HepG2 (cell line): ENCODE measurements at regions of chr5 and their contacts with region 1.

Region 1: GRCh38 chr5:149834246-149834855 is 104.2 kb downstream of the PPARGC1B start:
- DNase-seq: peak; percentile 60
- ATAC-seq: peak; percentile 64
- H3K4me3 ChIP-seq: no peak overlapping the region
- H3K27ac ChIP-seq: no peak overlapping the region
- H3K4me1 ChIP-seq: no peaks in the 10 kb centered on the region
- H3K27me3 ChIP-seq: no peaks in the 10 kb centered on the region
- CTCF ChIP-seq: peak; percentile 85
- EP300 ChIP-seq: no peak
- POLR2A ChIP-seq: no peak
- RAD21 ChIP-seq: peak; percentile 47; the same call in 1 of the 2 replicates

Region 2: DNA sequence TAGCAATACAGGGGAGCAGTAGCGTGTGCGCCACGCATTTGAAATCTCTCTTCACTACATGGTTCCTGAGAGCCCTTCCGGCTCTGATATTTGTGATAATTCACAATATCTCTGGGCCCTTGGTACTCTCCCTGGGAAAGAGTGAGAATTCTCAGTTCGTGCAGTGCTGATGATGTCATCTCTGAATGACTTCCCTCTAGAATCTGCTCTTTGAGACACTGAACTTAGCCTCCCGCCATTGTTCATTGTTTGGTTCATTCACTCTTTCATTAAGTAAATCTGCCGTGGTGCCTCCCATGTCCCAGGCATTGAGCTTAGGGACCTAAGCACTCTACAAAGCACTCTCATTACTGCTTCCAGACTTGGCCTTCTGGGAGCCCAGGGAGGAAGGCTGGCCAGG is 10.2 kb before region 1 on chr5:
- CTCF ChIA-PET with region 1: no interaction called
- POLR2A ChIA-PET with region 1: no interaction called
- in situ Hi-C with region 1: no loop called
- intact Hi-C with region 1: no loop called
- DNase-seq: peak; percentile 11
- ATAC-seq: no peak
- H3K4me3 ChIP-seq: no peak overlapping the region
- H3K27ac ChIP-seq: no peak overlapping the region
- H3K4me1 ChIP-seq: peaks cover 9% of the 10 kb centered on the region; the same call in 1 of the 2 replicates
- H3K27me3 ChIP-seq: no peaks in the 10 kb centered on the region
- CTCF ChIP-seq: no peak
- EP300 ChIP-seq: no peak
- POLR2A ChIP-seq: no peak
- RAD21 ChIP-seq: no peak

Region 3: DNA sequence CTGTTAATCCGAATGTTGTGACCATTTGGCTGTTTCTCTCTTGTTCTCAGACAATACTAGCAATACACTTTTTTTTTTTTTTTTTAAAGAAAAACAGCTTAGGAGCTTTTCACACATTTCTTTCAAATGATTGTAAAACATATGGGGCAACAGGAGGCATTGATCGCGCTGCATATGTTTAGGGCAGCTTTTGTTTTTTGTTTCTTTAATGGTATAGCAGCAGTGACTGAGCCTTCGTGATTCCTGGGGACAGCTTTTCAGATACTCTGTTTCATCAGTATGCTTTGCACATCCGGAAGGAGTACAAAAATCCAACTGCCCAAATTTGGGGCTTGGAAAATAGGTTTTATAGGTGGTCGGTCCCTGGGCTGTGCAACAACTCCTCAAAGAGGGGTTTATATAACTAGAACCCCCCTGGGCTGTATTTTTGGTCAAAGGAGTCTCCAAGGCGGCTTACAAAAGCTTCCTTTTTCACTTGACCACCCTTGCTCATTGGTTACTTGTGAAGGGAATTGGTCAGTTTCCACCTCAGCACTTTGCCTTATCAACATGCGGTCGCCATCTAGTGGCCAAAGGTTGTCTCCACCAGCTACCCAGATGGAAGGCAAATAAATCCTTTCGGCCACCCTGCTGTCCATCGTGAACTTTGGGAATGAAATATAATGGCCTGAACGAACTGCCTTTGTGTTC is 18.4 kb after region 1 on chr5:
- CTCF ChIA-PET with region 1: interaction called, 19 read pairs
- POLR2A ChIA-PET with region 1: interaction called, 3 read pairs
- in situ Hi-C with region 1: no loop called
- intact Hi-C with region 1: loop called (anchors 1 kb)
- DNase-seq: peak; percentile 58
- ATAC-seq: peak; percentile 92
- H3K4me3 ChIP-seq: no peak overlapping the region
- H3K27ac ChIP-seq: no peak overlapping the region
- H3K4me1 ChIP-seq: no peaks in the 10 kb centered on the region
- H3K27me3 ChIP-seq: no peaks in the 10 kb centered on the region
- CTCF ChIP-seq: peak; percentile 88
- EP300 ChIP-seq: no peak
- POLR2A ChIP-seq: no peak
- RAD21 ChIP-seq: 0 out of 2 replicates have a peak, but pooled peaks have one; percentile 35

Region 4: GRCh38 chr5:149960272-149961185 is 126.2 kb after region 1 on chr5 and contains the start of gene SLC26A2:
- CTCF ChIA-PET with region 1: interaction called, 6 read pairs
- POLR2A ChIA-PET with region 1: no interaction called
- in situ Hi-C with region 1: no loop called
- intact Hi-C with region 1: loop called (anchors 1 kb)
- DNase-seq: peak; percentile 92
- ATAC-seq: peak; percentile 99
- H3K4me3 ChIP-seq: peak within 1 kb of the TSS; percentile 51 to 77 (median 69)
- H3K27ac ChIP-seq: peak within 1 kb of the TSS; percentile 52
- H3K4me1 ChIP-seq: peaks cover 50% of the 10 kb centered on the region
- H3K27me3 ChIP-seq: no peaks in the 10 kb centered on the region
- CTCF ChIP-seq: peak; percentile 17; the same call in 1 of the 2 replicates
- EP300 ChIP-seq: no peak
- POLR2A ChIP-seq: peak; percentile 85 to 91
- RAD21 ChIP-seq: peak; percentile 48; the same call in 1 of the 2 replicates
- total RNA-seq, gene SLC26A2: 6.3 and 7.9 TPM in 2 replicates

Region 5: GRCh38 chr5:150000256-150000989 is 166.1 kb after region 1 on chr5 and contains the starts of genes HMGXB3 and TIGD6:
- CTCF ChIA-PET with region 1: no interaction called
- POLR2A ChIA-PET with region 1: no interaction called
- in situ Hi-C with region 1: no loop called
- intact Hi-C with region 1: no loop called
- DNase-seq: peak; percentile 94
- ATAC-seq: peak; percentile 97
- H3K4me3 ChIP-seq: peak within 1 kb of the TSS; percentile 86 to 91 (median 89)
- H3K27ac ChIP-seq: peak within 1 kb of the TSS; percentile 87
- H3K4me1 ChIP-seq: peaks cover 32% of the 10 kb centered on the region
- H3K27me3 ChIP-seq: no peaks in the 10 kb centered on the region; a peak in 1 of 5 replicates
- CTCF ChIP-seq: peak; percentile 43
- EP300 ChIP-seq: no peak
- POLR2A ChIP-seq: peak; percentile 84 to 85
- RAD21 ChIP-seq: peak; percentile 35; the same call in 1 of the 2 replicates
- total RNA-seq, gene HMGXB3: 20.0 and 23.8 TPM in 2 replicates
- total RNA-seq, gene TIGD6: 2.1 TPM in 2 replicates

Region 6: GRCh38 chr5:150129813-150130492 is 295.6 kb after region 1 on chr5:
- CTCF ChIA-PET with region 1: no interaction called
- POLR2A ChIA-PET with region 1: no interaction called
- in situ Hi-C with region 1: no loop called
- intact Hi-C with region 1: loop called (anchors 10 kb)
- DNase-seq: peak; percentile 67
- ATAC-seq: peak; percentile 88
- H3K4me3 ChIP-seq: no peak overlapping the region
- H3K27ac ChIP-seq: no peak overlapping the region
- H3K4me1 ChIP-seq: peaks cover 43% of the 10 kb centered on the region
- H3K27me3 ChIP-seq: no peaks in the 10 kb centered on the region
- CTCF ChIP-seq: peak; percentile 99
- EP300 ChIP-seq: 0 out of 4 replicates have a peak, but pooled peaks have one; percentile 35 to 39
- POLR2A ChIP-seq: no peak
- RAD21 ChIP-seq: peak; percentile 98